Mammary epithelial cell (primary cell): ENCODE measurements at regions of chr15 and their contacts with region 1.

Region 1: DNA sequence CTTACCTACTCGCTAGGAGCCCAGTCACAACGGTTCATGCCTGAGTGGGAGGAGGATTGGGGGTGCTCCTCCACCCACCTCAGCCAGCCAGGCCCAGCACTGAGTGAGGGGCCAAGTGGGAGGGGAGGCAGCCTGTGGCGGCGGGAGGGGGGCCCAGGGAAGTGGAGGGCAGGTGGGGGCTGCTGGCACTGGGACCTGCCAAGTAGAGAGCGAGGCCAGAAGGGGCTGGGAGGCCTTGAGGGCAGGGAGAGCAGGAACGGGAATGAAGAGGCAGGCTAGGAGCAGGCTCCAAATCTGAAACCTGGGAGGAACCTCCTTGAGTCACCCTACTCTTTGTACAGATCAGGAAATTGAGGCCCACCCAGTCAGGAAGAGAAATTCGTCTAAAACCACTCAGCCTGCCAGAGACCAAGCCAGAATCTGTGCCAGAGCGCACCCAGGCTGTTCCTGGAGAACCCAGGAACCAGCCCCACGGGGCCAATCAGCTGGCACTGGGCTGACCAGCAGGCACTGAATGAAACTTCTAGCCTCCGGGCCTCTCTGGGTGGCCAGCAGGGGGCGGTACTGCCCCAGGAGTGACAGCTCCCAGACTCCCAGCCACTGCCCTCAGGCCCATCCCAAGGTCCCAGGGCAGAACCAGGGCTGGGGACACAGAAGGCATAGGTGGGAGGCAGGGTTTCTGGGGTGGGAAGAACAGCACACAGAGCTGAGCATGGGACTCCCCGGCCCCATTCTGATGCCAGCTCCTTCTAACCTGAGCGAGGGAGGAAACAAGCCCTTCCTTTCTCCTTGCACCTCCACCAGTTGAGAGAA is 14.8 kb upstream of the CYP11A1 start:
- DNase-seq: peak; percentile 86
- H3K4me3 ChIP-seq: no peak overlapping the region
- H3K27ac ChIP-seq: peak overlapping the region; percentile 95
- H3K4me1 ChIP-seq: peaks cover 68% of the 10 kb centered on the region
- H3K27me3 ChIP-seq: no peaks in the 10 kb centered on the region
- CTCF ChIP-seq: peak; percentile 83 to 98

Region 2: GRCh38 chr15:74407055-74407691 is 25.0 kb after region 1 on chr15:
- CTCF ChIA-PET with region 1: interaction called, 22 read pairs
- dilution Hi-C with region 1: no loop called
- in situ Hi-C with region 1: no loop called
- intact Hi-C with region 1: loop called (anchors 1 kb)
- DNase-seq: peak; percentile 88
- H3K4me3 ChIP-seq: no peak overlapping the region
- H3K27ac ChIP-seq: peak overlapping the region; percentile 56
- H3K4me1 ChIP-seq: peaks cover 30% of the 10 kb centered on the region
- H3K27me3 ChIP-seq: no peaks in the 10 kb centered on the region
- CTCF ChIP-seq: peak in 1 of 2 donors; percentile 17

Region 3: DNA sequence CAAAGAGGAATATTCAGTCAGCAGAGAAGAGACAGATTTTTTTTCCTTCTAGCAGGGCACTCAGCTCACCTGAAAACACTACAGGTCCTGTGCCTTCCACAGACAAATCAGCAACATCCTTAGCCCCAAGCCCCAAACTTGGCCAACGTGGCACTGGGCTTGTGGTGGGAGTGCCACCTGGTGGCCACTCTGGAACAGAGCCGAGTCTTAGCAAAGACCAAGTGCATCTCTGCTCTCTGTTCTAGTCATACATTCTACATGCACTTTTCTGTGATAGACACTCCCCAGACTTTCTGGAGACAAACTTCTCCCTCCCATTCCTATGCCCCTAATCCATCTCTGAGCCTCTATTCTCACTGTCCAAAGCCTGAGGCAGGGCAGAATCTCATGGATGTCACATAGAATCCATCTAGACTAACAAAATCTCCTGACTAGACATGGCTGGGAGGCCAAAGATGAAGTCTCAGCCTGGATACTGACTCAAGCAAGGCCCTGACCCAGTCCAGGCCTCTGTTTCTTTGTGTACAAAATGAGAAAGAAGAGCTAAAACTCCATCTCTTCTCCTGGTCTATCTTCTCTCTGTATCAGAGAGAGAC is 56.6 kb after region 1 on chr15:
- CTCF ChIA-PET with region 1: interaction called, 3 read pairs
- dilution Hi-C with region 1: loop called (anchors 10 kb)
- in situ Hi-C with region 1: loop called (anchors 5 kb)
- intact Hi-C with region 1: loop called (anchors 1 kb)
- DNase-seq: peak; percentile 73
- H3K4me3 ChIP-seq: no peak overlapping the region
- H3K27ac ChIP-seq: no peak overlapping the region
- H3K4me1 ChIP-seq: peaks cover 4% of the 10 kb centered on the region
- H3K27me3 ChIP-seq: no peaks in the 10 kb centered on the region
- CTCF ChIP-seq: peak; percentile 97 to 98

Region 4: DNA sequence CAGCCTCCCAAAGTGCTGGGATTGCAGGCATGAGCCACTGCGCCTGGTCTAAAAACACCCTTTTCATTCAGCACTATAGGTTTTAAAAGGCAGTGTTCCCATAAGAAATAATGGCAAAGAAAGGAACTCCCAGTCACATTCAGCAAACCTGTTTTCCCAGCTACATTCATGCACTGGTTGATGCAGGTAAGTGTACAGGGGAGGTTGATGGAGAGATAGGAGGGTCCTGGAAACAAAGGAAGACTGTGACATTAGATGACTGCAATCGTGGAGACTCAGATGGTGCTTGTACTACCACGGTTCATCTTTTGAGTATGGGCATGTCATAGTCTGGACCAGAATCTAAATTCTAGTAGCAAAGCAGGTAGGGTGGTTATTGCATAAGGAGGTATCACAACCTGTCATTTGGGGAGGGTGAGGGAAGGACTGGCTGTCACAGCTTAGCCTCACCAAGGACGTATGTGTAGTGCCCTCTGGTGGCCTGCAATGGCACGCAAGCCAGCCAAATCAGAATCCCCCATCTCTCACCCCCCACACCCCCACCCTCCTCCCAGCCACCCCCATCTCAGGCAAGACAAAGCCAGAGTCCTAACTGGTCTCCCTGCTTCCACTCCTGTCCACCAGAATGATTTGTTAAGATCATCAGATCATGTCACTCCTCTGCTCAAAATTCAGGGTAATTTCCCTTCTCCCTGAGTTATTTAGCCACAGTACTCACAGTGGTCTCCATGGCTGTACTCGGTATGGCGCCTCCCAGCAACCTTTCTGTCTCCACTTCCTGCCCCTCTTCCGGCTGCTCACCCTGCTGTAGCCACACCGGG is 107.5 kb after region 1 on chr15:
- CTCF ChIA-PET with region 1: interaction called, 3 read pairs
- dilution Hi-C with region 1: no loop called
- in situ Hi-C with region 1: no loop called
- intact Hi-C with region 1: loop called (anchors 1 kb)
- DNase-seq: peak; percentile 20
- H3K4me3 ChIP-seq: no peak overlapping the region
- H3K27ac ChIP-seq: no peak overlapping the region
- H3K4me1 ChIP-seq: no peaks in the 10 kb centered on the region
- H3K27me3 ChIP-seq: no peaks in the 10 kb centered on the region
- CTCF ChIP-seq: peak; percentile 50 to 72